Activated CD4-positive, alpha-beta memory T cell treated with anti-CD3 and anti-CD28 coated beads for 36 hours (primary cell): ENCODE measurements at regions of chr9 and their contacts with region 1.

Region 1: DNA sequence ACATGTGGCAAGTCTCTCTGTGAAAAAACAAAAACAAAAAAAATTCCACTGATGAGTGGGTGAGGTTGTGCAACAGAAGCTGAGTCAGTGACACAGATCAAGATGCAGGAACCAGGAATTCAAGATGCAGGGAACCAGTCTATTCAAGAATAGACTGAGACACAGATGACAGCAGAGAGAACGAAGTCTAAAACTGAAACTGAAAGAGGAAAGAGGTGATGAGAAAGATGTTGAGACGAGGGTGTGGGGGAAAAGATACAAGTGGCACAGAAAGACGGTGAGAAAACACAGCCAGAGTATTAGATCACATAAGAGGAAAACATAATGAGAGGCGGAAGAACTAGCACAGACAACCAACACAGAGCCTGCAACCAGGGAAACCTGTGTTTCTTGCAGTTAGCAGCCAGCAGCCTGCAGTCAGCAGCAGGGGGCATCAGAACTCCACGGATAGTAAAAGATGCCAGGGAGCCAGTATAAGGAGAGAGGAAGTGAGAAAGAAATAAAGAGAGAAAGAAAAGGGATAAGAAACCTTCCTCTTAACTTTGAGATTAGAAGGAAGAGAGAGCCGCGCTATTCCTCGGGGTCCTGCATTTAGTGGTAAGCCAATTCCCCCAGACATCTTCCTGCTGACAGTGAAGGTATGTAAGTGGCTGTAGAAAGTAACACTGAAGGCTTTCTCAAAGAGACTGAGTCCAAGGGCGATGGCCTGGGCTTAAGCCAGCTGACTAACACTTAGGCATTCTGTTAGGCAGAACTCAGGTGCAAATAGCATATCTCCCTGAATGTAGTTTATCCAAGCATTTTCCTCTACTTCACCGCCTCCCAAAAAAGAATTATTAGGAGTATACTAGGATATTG is 79.0 kb downstream of the TLR4 start:
- DNase-seq: peak; percentile 65
- H3K4me3 Mint-ChIP-seq: no peak overlapping the region
- H3K27ac Mint-ChIP-seq: no peak overlapping the region
- H3K4me1 Mint-ChIP-seq: peaks cover 5% of the 10 kb centered on the region
- H3K27me3 Mint-ChIP-seq: no peaks in the 10 kb centered on the region

Region 2: GRCh38 chr9:117682955-117683710 is 100.0 kb before region 1 on chr9:
- CTCF ChIA-PET with region 1: no interaction called
- POLR2A ChIA-PET with region 1: no interaction called
- intact Hi-C with region 1: loop called (anchors 1 kb)
- DNase-seq: no peak
- H3K4me3 Mint-ChIP-seq: no peak overlapping the region
- H3K27ac Mint-ChIP-seq: no peak overlapping the region
- H3K4me1 Mint-ChIP-seq: peaks cover 7% of the 10 kb centered on the region
- H3K27me3 Mint-ChIP-seq: peaks cover 4% of the 10 kb centered on the region

Region 3: DNA sequence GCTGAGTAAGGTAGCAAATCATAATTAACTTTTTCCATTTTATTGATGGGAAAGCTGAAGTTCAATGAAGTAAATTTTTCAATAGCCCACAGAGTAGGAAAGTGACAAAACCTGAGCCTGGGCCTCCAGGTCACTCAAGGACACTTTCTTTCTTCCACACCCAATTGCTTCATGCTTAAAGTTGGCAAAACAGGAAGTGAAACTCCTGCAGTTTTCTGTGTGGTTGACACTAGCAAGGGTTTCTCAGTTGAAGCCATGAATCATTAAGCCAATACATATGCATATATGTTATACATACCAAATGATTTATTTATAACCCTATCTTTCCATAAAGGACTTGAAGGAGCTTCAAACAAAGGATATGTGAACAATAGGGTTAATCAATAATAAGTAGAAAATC is 65.1 kb before region 1 on chr9:
- CTCF ChIA-PET with region 1: no interaction called
- POLR2A ChIA-PET with region 1: no interaction called
- intact Hi-C with region 1: loop called (anchors 2 kb)
- DNase-seq: no peak
- H3K4me3 Mint-ChIP-seq: no peak overlapping the region
- H3K27ac Mint-ChIP-seq: no peak overlapping the region
- H3K4me1 Mint-ChIP-seq: peaks cover 4% of the 10 kb centered on the region
- H3K27me3 Mint-ChIP-seq: peaks cover 1% of the 10 kb centered on the region

Region 4: DNA sequence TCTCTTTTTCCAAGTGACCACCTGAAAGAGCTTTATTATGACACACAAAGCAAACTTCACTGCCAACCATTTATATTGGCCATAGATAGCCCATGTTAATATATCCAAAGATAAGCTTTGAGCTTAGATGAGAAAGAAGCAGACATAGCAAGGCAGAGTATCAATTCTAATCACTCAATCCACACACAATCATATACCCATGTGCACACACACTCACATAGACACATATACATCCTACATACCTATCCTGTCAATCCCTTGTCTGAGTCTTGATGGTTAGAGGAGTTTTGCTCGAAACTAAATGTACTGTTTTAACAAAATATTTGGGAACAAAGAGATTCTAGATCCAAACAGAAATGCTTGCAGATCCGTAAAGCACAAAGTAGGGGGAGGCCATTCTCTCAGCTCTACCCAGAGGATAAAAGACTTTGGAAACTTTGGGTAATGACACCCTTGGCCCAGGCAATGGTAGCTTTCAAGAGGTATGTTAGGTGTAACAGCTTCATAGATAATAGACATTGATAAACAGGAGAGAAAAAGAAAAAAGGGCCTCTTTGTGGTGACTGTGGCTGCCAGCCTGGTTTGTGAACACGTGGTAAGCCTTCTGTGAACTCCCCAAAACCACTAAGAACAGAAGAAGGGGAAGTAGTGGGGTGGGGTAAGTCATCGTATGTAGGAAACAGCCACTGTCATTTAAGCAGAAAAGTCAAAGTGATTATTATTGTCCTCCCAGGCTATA is 42.6 kb after region 1 on chr9:
- CTCF ChIA-PET with region 1: no interaction called
- POLR2A ChIA-PET with region 1: no interaction called
- intact Hi-C with region 1: loop called (anchors 1 kb)
- DNase-seq: peak; percentile 67
- H3K4me3 Mint-ChIP-seq: no peak overlapping the region
- H3K27ac Mint-ChIP-seq: no peak overlapping the region
- H3K4me1 Mint-ChIP-seq: peaks cover 29% of the 10 kb centered on the region
- H3K27me3 Mint-ChIP-seq: peaks cover 29% of the 10 kb centered on the region

Region 5: DNA sequence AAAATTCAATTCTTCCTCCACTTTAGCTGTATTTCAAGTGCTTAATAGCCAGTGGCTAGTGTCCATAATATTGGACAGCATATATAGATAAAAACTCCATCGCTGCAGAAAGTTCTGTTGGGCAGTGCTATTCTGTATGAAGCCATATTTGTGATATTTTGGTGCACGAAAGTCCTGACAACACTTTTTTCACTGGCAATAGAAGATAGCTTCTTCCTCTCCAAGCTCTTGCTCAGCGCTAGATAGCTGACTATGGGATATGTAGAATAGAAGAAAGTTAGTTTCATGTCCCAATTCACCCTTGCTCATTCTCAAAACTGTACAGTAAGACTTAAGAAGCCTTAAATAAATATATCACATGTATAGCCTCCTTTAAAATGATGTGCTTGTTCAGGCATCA is 190.9 kb after region 1 on chr9:
- CTCF ChIA-PET with region 1: no interaction called
- POLR2A ChIA-PET with region 1: no interaction called
- intact Hi-C with region 1: no loop called
- DNase-seq: no peak
- H3K4me3 Mint-ChIP-seq: no peak overlapping the region
- H3K27ac Mint-ChIP-seq: no peak overlapping the region
- H3K4me1 Mint-ChIP-seq: no peaks in the 10 kb centered on the region
- H3K27me3 Mint-ChIP-seq: no peaks in the 10 kb centered on the region